K562 (cell line): ENCODE measurements at regions of chr6 and their contacts with region 1.

Region 1: DNA sequence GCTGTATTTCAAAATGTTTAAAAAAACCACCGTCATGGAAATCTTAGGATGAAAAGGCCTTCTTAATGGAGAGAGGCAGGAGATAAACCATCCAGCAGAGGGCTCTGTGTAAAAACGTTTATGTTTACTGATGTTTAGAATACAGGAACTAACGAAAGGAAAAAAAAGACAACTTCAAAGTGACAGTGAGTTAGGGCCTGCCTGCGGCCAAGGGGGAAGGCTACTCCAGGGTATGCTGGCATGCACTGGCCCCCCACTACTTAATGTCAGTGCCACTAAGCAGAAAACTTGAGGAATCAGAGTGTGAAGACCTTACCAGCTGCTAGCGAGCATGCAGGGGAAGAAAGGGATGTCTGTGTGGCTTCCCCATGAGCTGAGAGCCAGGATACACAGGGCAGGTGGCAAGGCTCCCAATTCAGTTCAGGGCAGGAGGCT is 47.7 kb downstream of the AKAP7 start:
- DNase-seq: peak in 2 of 4 experiments; percentile 13 to 25
- ATAC-seq: peak; percentile 83
- H3K4me3 ChIP-seq: no peak overlapping the region
- H3K27ac ChIP-seq: no peak overlapping the region
- H3K4me1 ChIP-seq: no peaks in the 10 kb centered on the region
- H3K27me3 ChIP-seq: no peaks in the 10 kb centered on the region
- CTCF ChIP-seq: peak; percentile 33 to 51 (median 46); a peak in 4 of 6 replicates
- EP300 ChIP-seq: no peak
- POLR2A ChIP-seq: no peak
- RAD21 ChIP-seq: peak; percentile 35 to 39

Region 2: DNA sequence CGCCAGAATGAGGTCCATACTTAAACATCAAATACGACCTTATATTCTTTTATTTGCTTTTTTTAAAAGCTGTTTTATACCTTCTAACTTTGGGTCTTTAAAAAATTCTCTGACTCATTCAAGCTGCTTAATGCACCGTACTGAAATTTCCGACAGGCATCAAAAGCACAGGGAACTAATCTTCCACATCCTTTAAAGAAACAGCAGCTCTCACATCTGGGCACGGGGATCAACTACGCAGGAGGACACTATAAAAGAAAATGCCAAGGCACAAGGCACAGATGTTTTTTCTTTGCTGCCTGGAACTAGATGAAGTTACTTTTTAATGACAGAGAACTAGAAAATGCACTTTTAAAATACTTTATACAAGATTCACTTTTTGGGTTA is 277.6 kb after region 1 on chr6:
- CTCF ChIA-PET with region 1: no interaction called
- POLR2A ChIA-PET with region 1: no interaction called
- in situ Hi-C with region 1: no loop called
- intact Hi-C with region 1: loop called (anchors 10 kb)
- DNase-seq: no peak
- ATAC-seq: no peak
- H3K4me3 ChIP-seq: no peak overlapping the region
- H3K27ac ChIP-seq: no peak overlapping the region
- H3K4me1 ChIP-seq: no peaks in the 10 kb centered on the region
- H3K27me3 ChIP-seq: no peaks in the 10 kb centered on the region; a peak in 1 of 5 replicates
- CTCF ChIP-seq: no peak
- EP300 ChIP-seq: no peak
- POLR2A ChIP-seq: no peak
- RAD21 ChIP-seq: no peak